ENCODE measurements at regions of chr1 and their contacts with region 1.

Region 1: DNA sequence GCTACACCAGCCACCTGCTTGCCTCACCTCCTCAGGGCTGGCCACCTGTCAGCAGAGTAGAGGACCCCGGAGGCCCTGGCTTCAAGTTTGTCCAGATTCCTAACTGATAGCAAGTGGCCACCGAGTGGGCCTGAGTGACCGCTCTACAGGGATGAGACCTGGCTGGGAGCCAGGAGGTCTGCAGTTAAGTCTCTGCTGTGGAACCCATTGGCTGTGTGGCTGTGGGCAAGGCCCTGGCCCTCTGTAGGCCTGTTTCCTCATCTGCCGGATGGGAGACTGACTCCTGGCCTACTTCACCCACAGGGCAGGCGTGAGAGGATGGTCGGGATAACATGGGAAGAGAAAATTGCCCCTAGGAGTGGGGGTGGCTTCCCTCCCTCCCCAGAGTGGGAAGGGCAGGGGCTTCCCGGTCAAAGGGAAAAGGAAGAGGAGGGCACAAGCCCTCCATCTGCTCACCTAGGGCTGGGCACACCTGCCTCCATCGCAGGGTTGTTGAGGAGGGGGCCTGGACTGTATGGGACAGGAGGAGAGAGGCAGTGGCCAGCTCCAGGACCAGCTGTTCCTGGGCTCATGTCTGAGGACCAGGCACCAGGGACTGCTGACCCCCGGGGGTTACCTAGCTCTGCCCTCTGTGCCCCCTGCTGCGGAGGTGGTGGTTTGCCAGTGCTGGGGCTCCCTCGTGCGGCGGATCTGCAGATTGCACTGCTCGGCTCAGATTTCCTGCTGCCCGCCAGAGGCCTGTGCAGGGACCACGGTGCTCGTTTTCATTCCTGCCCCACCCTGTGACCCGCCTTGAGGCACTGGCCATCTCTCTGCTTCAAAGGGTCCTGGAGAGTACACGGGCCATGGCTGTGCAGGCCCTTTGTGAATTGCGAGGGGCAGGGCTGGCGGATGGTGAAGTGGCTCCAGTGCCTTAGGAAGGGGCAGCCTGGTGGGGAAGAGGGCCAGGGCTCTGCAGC is 9.1 kb upstream of the MTFR1L start:
- DNase-seq: peak; percentile 59 to 100
- H3K4me3 ChIP-seq: no peak overlapping the region
- H3K27ac ChIP-seq: no peak overlapping the region
- H3K4me1 ChIP-seq: peaks cover 0 to 5% (median under 1%) of the 10 kb centered on the region in 4 experiments; a peak in 2 of 7 replicates
- H3K27me3 ChIP-seq: no peaks in the 10 kb centered on the region
- CTCF ChIP-seq: peak; percentile 98 to 100 (median 99)
- EP300 ChIP-seq: no peak
- POLR2A ChIP-seq: no peak
- RAD21 ChIP-seq: peak; percentile 99 to 100

Region 2: GRCh38 chr1:25503551-25504426 is 306.8 kb before region 1 on chr1:
- CTCF ChIA-PET with region 1: interaction called, 12 read pairs
- POLR2A ChIA-PET with region 1: no interaction called
- DNase-seq: peak; percentile 68 to 80
- H3K4me3 ChIP-seq: no peak overlapping the region
- H3K27ac ChIP-seq: no peak overlapping the region
- H3K4me1 ChIP-seq: peaks cover 8 to 17% (median 11%) of the 10 kb centered on the region in 4 experiments
- H3K27me3 ChIP-seq: no peaks in the 10 kb centered on the region
- CTCF ChIP-seq: peak; percentile 78 to 91 (median 87)
- EP300 ChIP-seq: no peak
- POLR2A ChIP-seq: no peak
- RAD21 ChIP-seq: peak; percentile 77 to 78

Region 3: GRCh38 chr1:25608488-25609178 is 202.0 kb before region 1 on chr1:
- CTCF ChIA-PET with region 1: interaction called, 10 read pairs
- POLR2A ChIA-PET with region 1: interaction called, 3 read pairs
- DNase-seq: peak in 1 of 2 experiments; percentile 87
- H3K4me3 ChIP-seq: no peak overlapping the region
- H3K27ac ChIP-seq: no peak overlapping the region
- H3K4me1 ChIP-seq: no peaks in the 10 kb centered on the region
- H3K27me3 ChIP-seq: no peaks in the 10 kb centered on the region; a peak in 2 of 7 replicates
- CTCF ChIP-seq: peak; percentile 63 to 69 (median 65)
- EP300 ChIP-seq: no peak
- POLR2A ChIP-seq: no peak
- RAD21 ChIP-seq: peak; percentile 72 to 81

Region 4: GRCh38 chr1:25780311-25781129 is 30.1 kb before region 1 on chr1:
- CTCF ChIA-PET with region 1: interaction called, 13 read pairs
- POLR2A ChIA-PET with region 1: no interaction called
- DNase-seq: peak in 1 of 2 experiments; percentile 25
- H3K4me3 ChIP-seq: peak overlapping the region in 3 of 4 experiments; percentile 0 to 26 (median 6); a peak in 2 of 8 replicates
- H3K27ac ChIP-seq: no peak overlapping the region
- H3K4me1 ChIP-seq: peaks cover 6 to 24% (median 21%) of the 10 kb centered on the region in 4 experiments
- H3K27me3 ChIP-seq: no peaks in the 10 kb centered on the region; a peak in 1 of 7 replicates
- CTCF ChIP-seq: no peak
- EP300 ChIP-seq: no peak
- POLR2A ChIP-seq: no peak
- RAD21 ChIP-seq: 0 out of 4 replicates have a peak, but pooled peaks of 1 of the 2 experiments have one; percentile 2

Region 5: GRCh38 chr1:25854554-25854953 is 43.9 kb after region 1 on chr1:
- CTCF ChIA-PET with region 1: no interaction called
- POLR2A ChIA-PET with region 1: no interaction called
- DNase-seq: no peak
- H3K4me3 ChIP-seq: no peak overlapping the region
- H3K27ac ChIP-seq: no peak overlapping the region
- H3K4me1 ChIP-seq: no peaks in the 10 kb centered on the region; a peak in 2 of 7 replicates
- H3K27me3 ChIP-seq: no peaks in the 10 kb centered on the region
- CTCF ChIP-seq: no peak
- EP300 ChIP-seq: no peak
- POLR2A ChIP-seq: no peak
- RAD21 ChIP-seq: no peak

Measured in H1 (cell line).